Heart left ventricle (tissue), 16 donors: ENCODE measurements at regions of chr3 and their contacts with region 1.

Region 1: DNA sequence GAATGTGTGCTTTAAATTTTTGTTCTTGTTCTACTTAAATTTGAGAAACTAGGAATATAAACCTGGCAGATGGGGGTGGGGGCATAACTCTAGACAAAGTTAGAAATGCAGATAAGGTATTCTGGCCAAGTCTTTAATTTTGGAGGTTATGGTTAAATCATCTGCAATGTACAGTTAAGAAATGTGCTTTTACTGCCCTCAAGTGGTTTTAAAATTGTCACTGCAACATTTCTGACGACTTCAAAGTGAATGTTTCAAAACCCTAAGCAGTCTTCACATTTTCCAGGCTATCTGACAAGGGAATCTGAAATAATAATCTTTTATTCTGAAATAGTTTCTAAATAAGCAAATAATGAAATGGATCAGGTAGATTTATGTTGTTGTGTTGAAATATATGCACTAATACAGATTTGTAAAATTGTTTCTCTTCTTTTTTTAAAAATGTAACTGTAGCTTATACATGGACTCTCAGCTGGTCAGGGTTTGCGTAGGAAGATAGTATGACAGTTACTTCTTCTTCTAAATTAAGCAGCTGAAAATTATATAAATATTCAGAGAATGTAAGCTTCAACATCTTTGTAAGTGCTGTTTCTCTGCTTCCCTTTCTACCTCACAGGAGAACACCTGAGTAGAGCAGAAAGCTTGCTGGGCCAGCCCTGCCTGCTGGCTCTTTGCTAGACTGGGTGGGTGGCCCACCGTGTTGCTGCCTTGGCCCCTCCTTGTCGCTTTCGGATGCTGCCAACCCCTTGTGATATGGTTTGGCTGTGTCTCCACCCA is 45.0 kb downstream of the SUCNR1 start:
- DNase-seq: no peak
- ATAC-seq: peak in 3 of 4 donors; percentile 38 to 67 (median 39)
- H3K4me3 ChIP-seq: no peak overlapping the region
- H3K27ac ChIP-seq: no peak overlapping the region
- H3K4me1 ChIP-seq: peaks cover 0 to under 1% (median 0%) of the 10 kb centered on the region in 12 donors
- H3K27me3 ChIP-seq: no peaks in the 10 kb centered on the region
- CTCF ChIP-seq: peak; percentile 50 to 76 (median 68)
- POLR2A ChIP-seq: no peak

Region 2: GRCh38 chr3:151227807-151228665 is 690.4 kb before region 1 on chr3:
- intact Hi-C with region 1: loop called in 2 of 10 experiments (anchors 5 to 10 kb)
- DNase-seq: peak; percentile 60 to 75 (median 70)
- ATAC-seq: peak; percentile 65 to 94 (median 88)
- H3K4me3 ChIP-seq: no peak overlapping the region
- H3K27ac ChIP-seq: peak overlapping the region in 11 of 12 donors; percentile 19 to 86 (median 62)
- H3K4me1 ChIP-seq: peaks cover 0 to 46% (median 14%) of the 10 kb centered on the region in 12 donors
- H3K27me3 ChIP-seq: no peaks in the 10 kb centered on the region
- CTCF ChIP-seq: peak; percentile 84 to 96 (median 90)
- POLR2A ChIP-seq: no peak

Region 3: GRCh38 chr3:151282921-151283320 is 635.5 kb before region 1 on chr3:
- intact Hi-C with region 1: loop called in 1 of 10 experiments (anchors 10 kb)
- DNase-seq: no peak
- ATAC-seq: peak in 3 of 4 donors; percentile 54 to 73 (median 63)
- H3K4me3 ChIP-seq: no peak overlapping the region
- H3K27ac ChIP-seq: peak overlapping the region in 6 of 12 donors; percentile 6 to 74 (median 46)
- H3K4me1 ChIP-seq: peaks cover 0 to 35% (median 0%) of the 10 kb centered on the region in 12 donors
- H3K27me3 ChIP-seq: no peaks in the 10 kb centered on the region
- CTCF ChIP-seq: peak; percentile 48 to 81 (median 68)
- POLR2A ChIP-seq: no peak

Region 4: DNA sequence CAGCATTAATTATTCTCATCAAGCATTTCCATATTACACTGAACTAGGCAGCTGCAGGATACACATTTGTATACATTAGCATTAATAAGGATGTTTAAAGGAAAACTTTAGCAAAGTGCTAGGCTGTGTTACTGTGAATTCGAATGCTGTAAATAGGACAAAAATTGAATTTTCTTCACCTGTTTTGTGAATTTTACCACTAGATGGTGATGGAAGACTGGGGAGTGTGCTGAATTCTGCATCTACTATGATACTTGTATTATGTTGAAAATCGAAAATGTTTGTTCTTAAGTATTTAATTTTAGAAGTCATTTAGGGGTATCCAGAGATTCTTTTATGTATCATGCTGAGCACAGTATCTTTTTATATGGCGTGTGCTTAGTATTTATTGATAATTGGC is 627.8 kb before region 1 on chr3:
- intact Hi-C with region 1: loop called in 2 of 10 experiments (anchors 10 kb)
- DNase-seq: no peak
- ATAC-seq: no peak
- H3K4me3 ChIP-seq: no peak overlapping the region
- H3K27ac ChIP-seq: no peak overlapping the region
- H3K4me1 ChIP-seq: no peaks in the 10 kb centered on the region
- H3K27me3 ChIP-seq: no peaks in the 10 kb centered on the region
- CTCF ChIP-seq: peak in 9 of 12 donors; percentile 23 to 51 (median 36)
- POLR2A ChIP-seq: no peak

Region 5: DNA sequence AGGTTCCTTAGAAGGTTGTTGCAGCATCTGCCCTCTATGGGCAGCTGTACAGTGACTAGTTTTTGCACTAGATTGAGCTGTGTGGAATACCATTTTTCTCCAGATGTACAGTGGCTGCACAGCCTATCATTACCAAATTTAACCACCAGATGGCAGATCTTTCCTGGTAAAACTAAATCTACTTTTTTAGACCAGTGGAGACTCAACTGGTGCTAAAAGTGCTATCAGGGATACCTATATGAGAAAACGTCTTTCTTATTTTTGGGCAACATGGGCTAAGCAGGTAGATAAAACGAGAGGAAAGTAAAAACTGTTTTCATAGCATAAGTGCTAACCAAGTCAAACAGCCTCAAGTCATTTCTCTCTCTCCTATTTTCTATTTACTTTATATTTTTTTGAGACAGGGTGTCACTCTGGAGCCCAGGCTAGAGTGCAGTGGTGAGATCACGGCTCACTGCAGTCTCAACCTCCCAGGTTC is 478.8 kb before region 1 on chr3:
- intact Hi-C with region 1: loop called (anchors 2 to 10 kb)
- DNase-seq: no peak
- ATAC-seq: peak; percentile 67 to 73 (median 71)
- H3K4me3 ChIP-seq: no peak overlapping the region
- H3K27ac ChIP-seq: no peak overlapping the region
- H3K4me1 ChIP-seq: peaks cover 0 to 1% (median 0%) of the 10 kb centered on the region in 12 donors
- H3K27me3 ChIP-seq: no peaks in the 10 kb centered on the region
- CTCF ChIP-seq: peak; percentile 64 to 86 (median 78)
- POLR2A ChIP-seq: no peak

Region 6: DNA sequence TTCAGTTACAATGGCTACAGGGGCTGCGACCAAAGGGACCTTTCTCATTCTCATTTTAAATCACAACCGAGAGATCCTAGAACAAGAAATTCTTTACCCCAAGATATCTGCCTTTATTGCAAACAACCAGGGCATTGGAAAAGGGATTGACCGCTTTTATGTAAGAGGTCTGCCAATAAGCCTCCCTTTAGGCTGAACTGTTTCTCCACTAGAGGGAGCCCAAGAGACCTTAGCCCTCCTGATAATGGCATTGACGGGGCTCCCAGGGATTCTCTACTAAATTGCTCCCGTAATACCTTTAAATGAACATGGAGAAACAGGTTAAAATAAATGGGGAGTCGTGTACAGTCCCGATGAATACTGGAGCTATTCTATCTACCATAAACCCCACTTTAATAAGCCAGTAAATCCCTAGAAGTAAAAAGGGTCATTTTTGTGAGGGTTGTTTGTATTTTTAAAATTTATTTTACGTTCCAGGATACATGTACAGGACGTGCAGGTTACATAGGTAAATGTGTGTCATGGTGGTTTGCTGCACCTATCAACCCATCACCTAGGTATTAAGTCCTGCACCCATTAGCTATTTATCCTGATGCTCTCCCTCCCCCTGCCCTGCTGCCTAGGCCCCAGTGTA is 450.0 kb before region 1 on chr3:
- intact Hi-C with region 1: loop called in 3 of 10 experiments (anchors 2 to 10 kb)
- DNase-seq: peak in 1 of 5 donors; percentile 31
- ATAC-seq: peak in 3 of 4 donors; percentile 58 to 76 (median 70)
- H3K4me3 ChIP-seq: no peak overlapping the region
- H3K27ac ChIP-seq: no peak overlapping the region
- H3K4me1 ChIP-seq: no peaks in the 10 kb centered on the region
- H3K27me3 ChIP-seq: no peaks in the 10 kb centered on the region
- CTCF ChIP-seq: peak; percentile 71 to 91 (median 86)
- POLR2A ChIP-seq: no peak

Region 7: DNA sequence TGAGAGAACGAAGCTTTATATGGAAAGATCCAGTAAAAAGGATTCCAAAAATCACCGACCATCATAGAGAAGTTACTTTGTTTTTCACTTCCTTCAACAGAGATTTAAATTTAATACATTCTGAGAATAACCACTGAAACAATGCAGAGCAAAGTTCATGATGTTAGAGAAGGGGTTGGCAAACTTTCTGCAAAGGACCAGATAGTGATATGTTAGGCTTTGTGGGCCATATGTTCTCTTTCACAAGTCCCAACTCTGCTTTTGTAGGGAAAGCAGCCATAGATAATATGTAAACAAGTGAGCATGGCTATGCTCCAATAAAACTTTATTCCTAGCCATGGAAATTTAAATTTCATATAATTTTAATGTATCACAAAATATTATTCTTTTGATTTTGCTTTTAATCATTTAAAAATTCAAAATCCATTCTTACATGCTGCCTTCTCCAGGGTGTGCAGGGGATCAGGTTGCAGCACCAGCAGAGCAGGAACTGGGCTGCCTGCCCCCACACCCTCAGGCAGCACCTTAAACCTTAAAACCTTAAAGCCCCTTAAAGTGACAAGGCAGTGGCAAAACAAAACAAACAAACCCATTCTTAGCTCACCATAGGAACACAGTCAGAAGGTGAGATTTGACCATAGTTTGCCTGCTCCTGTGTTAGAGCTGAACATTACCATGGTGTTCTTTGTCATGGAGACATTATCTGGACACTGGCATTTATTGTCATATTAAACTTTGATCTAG is 440.7 kb before region 1 on chr3:
- intact Hi-C with region 1: loop called in 1 of 10 experiments (anchors 10 kb)
- DNase-seq: no peak
- ATAC-seq: no peak
- H3K4me3 ChIP-seq: no peak overlapping the region
- H3K27ac ChIP-seq: no peak overlapping the region
- H3K4me1 ChIP-seq: peaks cover 0 to 10% (median 0%) of the 10 kb centered on the region in 12 donors
- H3K27me3 ChIP-seq: no peaks in the 10 kb centered on the region
- CTCF ChIP-seq: no peak
- POLR2A ChIP-seq: no peak